Ascending aorta (tissue), 2 donors: ENCODE measurements at regions of chr2 and their contacts with region 1.

Region 1: DNA sequence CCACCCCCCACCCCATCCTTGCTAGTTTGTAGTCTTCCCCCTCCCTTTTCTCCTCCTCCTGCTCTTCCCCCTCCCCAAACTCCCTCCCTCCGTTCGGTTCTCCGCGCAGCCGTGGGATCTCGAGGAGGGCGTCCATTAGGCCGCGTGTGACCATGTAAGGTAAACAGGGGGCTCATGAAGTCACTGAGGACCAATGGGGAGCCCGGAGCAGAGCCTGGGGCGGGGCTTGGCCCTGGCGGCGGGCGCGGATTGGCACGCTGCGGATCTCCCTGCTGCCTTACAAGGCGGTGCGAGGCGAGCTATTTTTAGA is 246 bp upstream of the KLF7 start:
- DNase-seq: peak; percentile 99 to 100
- H3K4me3 ChIP-seq: peak overlapping the region; percentile 79 to 95
- H3K27ac ChIP-seq: peak overlapping the region; percentile 100
- H3K4me1 ChIP-seq: peaks cover 6 to 16% of the 10 kb centered on the region in 2 donors
- H3K27me3 ChIP-seq: no peaks in the 10 kb centered on the region
- CTCF ChIP-seq: no peak

Region 2: GRCh38 chr2:206968134-206969086 is 197.6 kb before region 1 on chr2:
- intact Hi-C with region 1: loop called (anchors 2 kb)
- DNase-seq: peak in 1 of 2 donors; percentile 80
- H3K4me3 ChIP-seq: peak overlapping the region in 1 of 2 donors; percentile 28
- H3K27ac ChIP-seq: peak overlapping the region; percentile 75 to 78
- H3K4me1 ChIP-seq: peaks cover 4 to 21% of the 10 kb centered on the region in 2 donors
- H3K27me3 ChIP-seq: no peaks in the 10 kb centered on the region
- CTCF ChIP-seq: no peak

Region 3: DNA sequence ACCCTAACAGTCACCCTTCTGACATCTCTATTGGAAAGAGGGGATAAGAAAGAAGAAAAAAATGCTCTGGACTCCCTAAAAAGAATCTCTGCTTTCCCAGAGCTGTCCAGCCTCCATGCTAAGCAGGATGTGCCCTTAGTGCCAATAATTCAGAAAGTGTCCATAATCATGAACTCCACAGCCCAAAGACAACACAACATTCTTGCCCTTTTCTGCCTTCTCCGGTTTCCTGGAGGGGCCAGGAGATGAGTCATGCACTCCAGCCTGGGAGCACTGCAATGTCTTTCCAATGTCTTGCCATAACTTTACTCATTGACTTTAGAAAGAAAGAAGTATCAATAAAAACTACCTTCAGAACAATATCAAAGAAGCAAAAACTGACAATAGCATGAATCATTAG is 44.2 kb before region 1 on chr2:
- intact Hi-C with region 1: loop called (anchors 5 kb)
- DNase-seq: peak in 1 of 2 donors; percentile 77
- H3K4me3 ChIP-seq: no peak overlapping the region
- H3K27ac ChIP-seq: peak overlapping the region; percentile 20 to 60
- H3K4me1 ChIP-seq: peaks cover 3 to 37% of the 10 kb centered on the region in 2 donors
- H3K27me3 ChIP-seq: no peaks in the 10 kb centered on the region
- CTCF ChIP-seq: no peak

Region 4: DNA sequence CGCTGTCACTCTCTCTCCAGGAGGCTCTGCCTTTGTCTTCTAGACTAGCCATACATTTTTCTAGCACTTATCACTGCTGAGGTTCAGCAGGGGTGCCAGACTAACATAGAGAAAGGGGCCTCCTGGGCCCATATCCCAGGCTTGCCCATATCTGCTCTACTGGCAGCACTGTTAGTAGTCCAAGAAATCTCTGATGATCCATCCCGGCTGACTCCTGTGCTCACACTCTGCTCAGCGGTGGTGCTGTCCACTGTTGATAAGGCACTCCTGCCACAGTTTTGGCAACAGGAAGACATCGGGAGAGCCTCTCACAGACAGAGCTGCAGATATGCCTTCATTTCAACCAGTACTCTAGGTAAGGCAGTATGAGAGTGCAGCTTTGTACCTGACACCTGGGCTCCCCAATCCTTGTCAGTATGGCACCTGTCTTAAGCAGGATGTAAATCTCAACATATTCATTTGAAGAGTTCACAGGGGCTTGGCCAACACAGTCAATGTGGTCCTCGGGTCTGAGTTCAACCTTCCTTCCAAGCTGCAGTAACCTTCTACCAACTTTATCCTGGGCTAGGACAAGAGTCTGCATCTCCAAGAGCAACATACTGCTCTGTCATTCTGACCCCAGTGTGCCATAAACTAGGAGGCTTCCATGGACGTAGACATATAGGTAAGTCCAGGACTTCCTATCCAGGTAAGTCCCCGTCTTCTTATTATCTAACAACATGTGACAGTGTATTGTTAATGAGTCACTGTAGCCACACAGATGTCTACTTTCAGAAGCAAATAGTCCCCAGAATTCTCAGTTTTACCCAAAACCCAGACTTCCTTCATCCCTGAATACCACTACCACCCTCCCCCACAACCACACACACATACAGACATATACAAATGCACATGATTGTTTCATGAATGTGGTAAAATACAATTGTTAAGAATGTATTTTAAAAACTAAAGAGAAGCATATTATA is 16.5 kb before region 1 on chr2:
- intact Hi-C with region 1: loop called (anchors 2 kb)
- DNase-seq: no peak
- H3K4me3 ChIP-seq: peak overlapping the region; percentile 24 to 51
- H3K27ac ChIP-seq: peak overlapping the region; percentile 89 to 96
- H3K4me1 ChIP-seq: peaks cover 29 to 80% of the 10 kb centered on the region in 2 donors
- H3K27me3 ChIP-seq: no peaks in the 10 kb centered on the region
- CTCF ChIP-seq: no peak

Region 5: GRCh38 chr2:207274530-207275189 is 108.7 kb after region 1 on chr2:
- intact Hi-C with region 1: no loop called
- DNase-seq: no peak
- H3K4me3 ChIP-seq: no peak overlapping the region
- H3K27ac ChIP-seq: no peak overlapping the region
- H3K4me1 ChIP-seq: no peaks in the 10 kb centered on the region
- H3K27me3 ChIP-seq: no peaks in the 10 kb centered on the region
- CTCF ChIP-seq: no peak

Region 6: GRCh38 chr2:207334624-207335371 is 168.8 kb after region 1 on chr2:
- intact Hi-C with region 1: loop called (anchors 2 kb)
- DNase-seq: peak; percentile 14 to 89
- H3K4me3 ChIP-seq: peak overlapping the region; percentile 32 to 50
- H3K27ac ChIP-seq: peak overlapping the region; percentile 80 to 83
- H3K4me1 ChIP-seq: peaks cover 0 to 5% of the 10 kb centered on the region in 2 donors
- H3K27me3 ChIP-seq: no peaks in the 10 kb centered on the region
- CTCF ChIP-seq: no peak

Region 7: GRCh38 chr2:207710814-207711740 is 545.1 kb after region 1 on chr2 and contains the start of gene CCNYL1:
- intact Hi-C with region 1: loop called (anchors 5 kb)
- DNase-seq: peak; percentile 95 to 99
- H3K4me3 ChIP-seq: peak within 1 kb of the TSS; percentile 75 to 92
- H3K27ac ChIP-seq: peak within 1 kb of the TSS; percentile 88 to 90
- H3K4me1 ChIP-seq: peaks cover 0 to 6% of the 10 kb centered on the region in 2 donors
- H3K27me3 ChIP-seq: no peaks in the 10 kb centered on the region
- CTCF ChIP-seq: peak; percentile 17 to 55 (median 17)
- total RNA-seq, gene CCNYL1: 12.3 TPM